Ascending aorta (tissue), 2 donors: ENCODE measurements at regions of chr20 and their contacts with region 1.

Region 1: GRCh38 chr20:44180814-44181213 is 6.2 kb downstream of the JPH2 start:
- DNase-seq: peak; percentile 49 to 86
- H3K4me3 ChIP-seq: peak overlapping the region; percentile 37 to 82
- H3K27ac ChIP-seq: peak overlapping the region; percentile 89 to 95
- H3K4me1 ChIP-seq: peaks cover 10 to 39% of the 10 kb centered on the region in 2 donors
- H3K27me3 ChIP-seq: no peaks in the 10 kb centered on the region
- CTCF ChIP-seq: no peak

Region 2: DNA sequence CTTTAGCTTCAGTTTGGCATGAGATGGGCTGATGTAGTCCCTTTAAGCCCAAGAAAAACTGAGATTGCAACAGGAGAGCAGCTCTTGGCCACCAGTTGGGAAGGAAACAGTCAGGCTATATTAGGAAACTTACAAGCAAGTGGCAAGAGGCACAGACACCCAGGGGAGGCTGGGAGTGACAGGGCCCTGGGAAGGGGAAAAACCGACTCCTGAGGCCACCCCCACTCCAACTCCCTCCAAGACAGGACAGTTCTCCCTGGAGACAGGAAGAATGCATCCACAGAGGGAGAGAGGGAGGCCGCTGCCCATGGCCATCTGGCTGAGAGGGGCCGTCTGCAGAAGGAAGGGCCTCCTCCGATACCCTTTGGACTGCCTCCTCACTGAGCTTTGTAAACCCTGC is 14.3 kb before region 1 on chr20:
- intact Hi-C with region 1: loop called (anchors 2 kb)
- DNase-seq: peak in 1 of 2 donors; percentile 89
- H3K4me3 ChIP-seq: peak overlapping the region; percentile 27 to 54
- H3K27ac ChIP-seq: peak overlapping the region; percentile 86 to 89
- H3K4me1 ChIP-seq: peaks cover 8 to 42% of the 10 kb centered on the region in 2 donors
- H3K27me3 ChIP-seq: no peaks in the 10 kb centered on the region
- CTCF ChIP-seq: no peak

Region 3: DNA sequence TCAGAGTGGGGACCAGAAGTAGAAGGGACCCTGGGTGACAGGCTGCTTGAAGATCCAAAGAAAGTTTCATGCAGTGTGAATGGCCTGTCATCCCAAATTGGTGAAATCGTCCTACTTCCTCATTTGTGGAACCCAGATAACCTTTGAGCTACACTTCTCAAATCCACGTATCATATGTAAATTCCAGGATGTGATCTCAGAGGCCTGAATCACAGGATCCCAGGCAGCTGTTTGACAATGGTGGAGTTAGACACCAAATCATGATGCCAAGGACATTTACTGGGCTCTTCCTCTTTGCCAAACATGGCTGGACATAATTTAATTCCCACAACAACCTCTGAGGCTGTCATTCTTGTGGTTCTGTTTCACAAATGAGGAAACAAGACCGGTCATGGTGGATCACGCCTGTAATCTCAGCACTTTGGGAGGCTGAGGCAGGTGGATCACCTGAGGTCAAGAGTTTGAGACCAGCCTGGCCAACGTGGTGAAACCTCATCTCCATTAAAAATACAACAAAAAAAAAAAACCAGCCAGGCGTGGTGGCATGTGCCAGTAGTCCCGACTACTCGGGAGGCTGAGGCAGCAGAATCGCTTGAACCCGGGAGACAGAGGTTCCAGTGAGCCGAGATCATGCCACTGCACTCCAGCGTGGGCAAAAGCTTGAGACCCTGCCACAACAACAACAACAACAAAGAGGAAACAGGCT is 255.0 kb after region 1 on chr20:
- intact Hi-C with region 1: no loop called
- DNase-seq: no peak
- H3K4me3 ChIP-seq: no peak overlapping the region
- H3K27ac ChIP-seq: no peak overlapping the region
- H3K4me1 ChIP-seq: no peaks in the 10 kb centered on the region
- H3K27me3 ChIP-seq: no peaks in the 10 kb centered on the region
- CTCF ChIP-seq: no peak